CD4-positive, alpha-beta memory T cell (primary cell): ENCODE measurements at regions of chr7 and their contacts with region 1.

Region 1: GRCh38 chr7:143269251-143269650 is 6.0 kb downstream of the GSTK1 start:
- DNase-seq: no peak
- H3K4me3 ChIP-seq: no peak overlapping the region
- H3K4me3 Mint-ChIP-seq: peak overlapping the region in 1 of 8 donors; percentile 7
- H3K27ac ChIP-seq: no peak overlapping the region
- H3K27ac Mint-ChIP-seq: peak overlapping the region in 6 of 7 donors; percentile 19 to 94 (median 69)
- H3K4me1 ChIP-seq: peaks cover 51% of the 10 kb centered on the region
- H3K4me1 Mint-ChIP-seq: peaks cover 24 to 49% (median 36%) of the 10 kb centered on the region in 4 donors
- H3K27me3 ChIP-seq: no peaks in the 10 kb centered on the region
- H3K27me3 Mint-ChIP-seq: no peaks in the 10 kb centered on the region

Region 2: DNA sequence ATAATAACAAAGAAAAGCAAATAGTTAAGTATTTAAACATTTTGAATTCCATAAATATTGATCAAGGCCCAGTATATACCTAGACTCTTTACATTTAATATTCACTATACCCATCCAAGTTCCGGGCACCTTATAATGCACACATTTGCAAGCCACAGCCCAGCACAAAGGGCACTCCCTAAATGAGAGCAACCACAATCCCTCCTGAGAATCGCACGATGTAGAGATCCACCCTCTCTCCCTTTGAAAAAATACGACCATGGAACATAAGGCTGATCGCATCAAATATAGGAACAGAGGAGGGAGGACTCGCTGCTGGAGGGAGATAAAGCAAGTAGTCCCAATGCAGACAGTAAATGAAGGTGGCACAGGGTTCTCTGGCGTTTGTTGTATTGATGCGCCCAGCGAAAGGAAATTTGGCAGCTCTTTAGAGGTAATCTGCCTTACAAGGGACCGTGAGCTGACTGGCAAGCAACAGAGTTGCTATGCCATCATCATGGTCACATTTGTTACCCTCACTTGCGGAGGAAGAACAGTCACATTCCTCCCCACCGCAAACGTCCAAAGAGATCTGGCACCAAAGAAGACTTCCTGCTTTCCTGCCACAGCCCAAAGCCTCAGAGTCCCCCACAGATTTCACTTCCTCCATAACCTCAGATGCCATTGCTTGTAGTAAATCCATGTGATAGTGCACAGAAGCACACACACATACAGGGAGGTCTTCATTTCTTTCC is 63.5 kb before region 1 on chr7:
- CTCF ChIA-PET with region 1: no interaction called
- POLR2A ChIA-PET with region 1: no interaction called
- intact Hi-C with region 1: no loop called
- DNase-seq: peak in 4 of 5 donors; percentile 16 to 28 (median 19)
- H3K4me3 ChIP-seq: peak overlapping the region in 1 of 2 donors; percentile 16
- H3K4me3 Mint-ChIP-seq: peak overlapping the region in 7 of 8 donors; percentile 4 to 71 (median 39)
- H3K27ac ChIP-seq: no peak overlapping the region
- H3K27ac Mint-ChIP-seq: peak overlapping the region in 3 of 7 donors; percentile 52 to 68 (median 65)
- H3K4me1 ChIP-seq: peaks cover 14% of the 10 kb centered on the region
- H3K4me1 Mint-ChIP-seq: peaks cover 8 to 20% (median 13%) of the 10 kb centered on the region in 4 donors
- H3K27me3 ChIP-seq: no peaks in the 10 kb centered on the region
- H3K27me3 Mint-ChIP-seq: peaks cover 7 to 13% of the 10 kb centered on the region in 2 donors

Region 3: DNA sequence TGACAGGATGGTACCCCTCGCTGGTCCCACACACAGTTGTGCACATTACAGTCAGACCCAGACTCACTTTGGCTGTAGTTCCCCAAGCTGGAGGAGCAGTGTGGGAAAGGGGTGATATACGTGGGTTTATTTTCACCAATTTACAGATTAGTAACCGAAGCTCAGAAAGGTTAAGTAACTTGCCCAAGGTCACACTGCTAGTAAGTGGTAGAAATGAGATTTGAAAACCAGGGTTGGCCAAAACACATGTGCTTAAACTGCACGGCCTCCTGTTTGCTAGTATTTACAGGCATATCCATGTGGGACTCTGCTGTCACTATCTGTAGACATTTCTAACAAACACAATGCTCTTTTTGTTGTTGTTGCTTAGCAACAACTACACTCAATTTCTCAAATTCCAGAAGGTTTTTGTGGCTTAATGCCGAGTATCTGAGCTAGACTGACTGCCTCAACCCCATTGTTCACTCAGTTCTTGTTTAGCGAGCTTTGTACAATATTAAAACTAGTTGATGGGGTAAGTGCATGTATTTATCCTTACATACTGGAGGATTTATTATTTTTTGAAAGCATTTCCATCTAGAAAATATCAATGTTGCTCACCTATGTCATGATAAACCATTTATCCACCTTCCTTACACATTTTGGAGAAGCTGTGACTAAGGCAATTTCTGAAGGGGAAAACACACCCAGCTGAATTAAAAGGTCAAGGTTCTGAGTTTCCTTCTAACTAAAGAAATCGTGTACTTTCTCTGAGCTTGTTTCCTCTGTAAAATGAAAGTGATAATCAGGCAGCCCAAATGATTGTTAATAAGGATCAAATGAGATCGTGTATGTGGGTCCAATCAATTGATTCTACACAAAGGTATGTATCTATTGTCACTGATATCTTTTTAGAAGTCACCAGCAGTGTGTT is 10.2 kb after region 1 on chr7:
- CTCF ChIA-PET with region 1: interaction called, 17 read pairs
- POLR2A ChIA-PET with region 1: interaction called, 62 read pairs
- intact Hi-C with region 1: no loop called
- DNase-seq: peak; percentile 52 to 74 (median 60)
- H3K4me3 ChIP-seq: peak overlapping the region; percentile 1 to 48
- H3K4me3 Mint-ChIP-seq: peak overlapping the region; percentile 61 to 89 (median 81)
- H3K27ac ChIP-seq: peak overlapping the region; percentile 74
- H3K27ac Mint-ChIP-seq: peak overlapping the region; percentile 83 to 97 (median 94)
- H3K4me1 ChIP-seq: peaks cover 33% of the 10 kb centered on the region
- H3K4me1 Mint-ChIP-seq: peaks cover 34 to 40% (median 37%) of the 10 kb centered on the region in 4 donors
- H3K27me3 ChIP-seq: no peaks in the 10 kb centered on the region
- H3K27me3 Mint-ChIP-seq: no peaks in the 10 kb centered on the region